ENCODE measurements at regions of chr17 and their contacts with region 1.

Region 1: GRCh38 chr17:8314797-8315763 is 5.0 kb downstream of the ARHGEF15 start:
- DNase-seq: no peak
- H3K4me3 ChIP-seq: peak overlapping the region; percentile 46 to 79 (median 66)
- H3K27ac ChIP-seq: no peak overlapping the region
- H3K4me1 ChIP-seq: peaks cover 0 to 16% (median 6%) of the 10 kb centered on the region in 4 experiments; a peak in 5 of 7 replicates
- H3K27me3 ChIP-seq: peaks cover 3 to 28% (median 23%) of the 10 kb centered on the region in 4 experiments
- CTCF ChIP-seq: no peak
- EP300 ChIP-seq: no peak
- POLR2A ChIP-seq: no peak
- RAD21 ChIP-seq: no peak

Region 2: GRCh38 chr17:7951143-7951803 is 363.8 kb before region 1 on chr17:
- CTCF ChIA-PET with region 1: no interaction called
- POLR2A ChIA-PET with region 1: no interaction called
- DNase-seq: no peak
- H3K4me3 ChIP-seq: no peak overlapping the region
- H3K27ac ChIP-seq: no peak overlapping the region; the same call in 1 of the 2 replicates
- H3K4me1 ChIP-seq: no peaks in the 10 kb centered on the region
- H3K27me3 ChIP-seq: no peaks in the 10 kb centered on the region; a peak in 1 of 7 replicates
- CTCF ChIP-seq: no peak
- EP300 ChIP-seq: no peak
- POLR2A ChIP-seq: no peak
- RAD21 ChIP-seq: no peak

Region 3: DNA sequence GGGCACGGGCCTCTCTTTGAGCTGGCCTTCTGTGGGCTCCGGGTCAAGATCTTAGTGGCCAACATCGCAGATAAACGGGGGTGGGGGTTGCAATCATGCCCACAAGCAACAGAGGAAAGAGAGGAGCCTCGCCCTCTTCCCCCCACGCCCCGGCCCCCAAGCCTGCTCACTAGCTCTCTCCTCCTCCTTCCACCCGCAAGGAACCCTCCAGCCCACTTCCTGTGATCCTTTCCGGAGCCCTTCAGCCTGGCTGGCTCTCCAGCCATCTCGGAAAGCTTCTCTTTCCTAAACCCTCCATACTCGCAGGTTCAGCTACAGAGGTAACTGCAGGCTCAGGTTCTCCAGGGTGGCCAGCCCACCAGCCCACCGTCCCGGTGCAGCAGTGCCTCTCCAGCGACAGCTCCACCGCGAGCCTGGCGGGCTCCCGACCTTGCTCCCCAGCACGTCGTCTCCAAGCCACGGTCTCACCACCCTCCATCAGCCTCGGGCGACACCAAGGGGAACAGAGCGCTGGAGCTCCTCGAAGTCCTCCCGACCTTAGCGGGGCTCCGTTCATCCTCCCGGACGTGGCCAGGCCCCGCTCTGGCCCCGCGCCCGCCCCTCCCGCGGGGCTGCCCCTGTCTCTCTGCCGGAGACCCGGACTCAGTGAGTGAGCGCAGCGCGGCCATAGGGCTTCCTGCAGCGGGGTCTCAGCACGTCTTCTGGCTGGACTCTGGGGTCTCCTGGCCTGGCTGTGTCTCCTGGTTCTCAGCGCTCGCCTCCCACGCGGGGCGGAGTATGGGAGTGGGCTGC is 11.6 kb after region 1 on chr17:
- CTCF ChIA-PET with region 1: interaction called, 11 read pairs
- POLR2A ChIA-PET with region 1: interaction called, 24 read pairs
- DNase-seq: peak in 1 of 2 experiments; percentile 74
- H3K4me3 ChIP-seq: peak overlapping the region; percentile 56 to 73 (median 62)
- H3K27ac ChIP-seq: no peak overlapping the region
- H3K4me1 ChIP-seq: peaks cover 0 to 11% (median 5%) of the 10 kb centered on the region in 4 experiments; a peak in 5 of 7 replicates
- H3K27me3 ChIP-seq: peaks cover 2 to 20% (median 17%) of the 10 kb centered on the region in 4 experiments; a peak in 6 of 7 replicates
- CTCF ChIP-seq: no peak
- EP300 ChIP-seq: no peak
- POLR2A ChIP-seq: 0 out of 3 replicates have a peak, but pooled peaks of 1 of the 2 experiments have one; percentile 33
- RAD21 ChIP-seq: no peak

Measured in H1 (cell line).